ENCODE measurements at regions of chr9 and their contacts with region 1.

Region 1: GRCh38 chr9:72038890-72039410 is 21.5 kb downstream of the C9orf57 start:
- DNase-seq: peak; percentile 60 to 71 (median 70)
- H3K4me3 ChIP-seq: no peak overlapping the region
- H3K4me3 Mint-ChIP-seq: no peak overlapping the region
- H3K27ac ChIP-seq: no peak overlapping the region
- H3K27ac Mint-ChIP-seq: peak overlapping the region in 2 of 7 donors; percentile 26 to 64
- H3K4me1 ChIP-seq: peaks cover 14 to 21% of the 10 kb centered on the region in 2 donors
- H3K4me1 Mint-ChIP-seq: peaks cover 26% of the 10 kb centered on the region
- H3K27me3 ChIP-seq: no peaks in the 10 kb centered on the region
- H3K27me3 Mint-ChIP-seq: peaks cover 2 to 4% (median 3%) of the 10 kb centered on the region in 3 donors
- CTCF ChIP-seq: peak; percentile 97

Region 2: DNA sequence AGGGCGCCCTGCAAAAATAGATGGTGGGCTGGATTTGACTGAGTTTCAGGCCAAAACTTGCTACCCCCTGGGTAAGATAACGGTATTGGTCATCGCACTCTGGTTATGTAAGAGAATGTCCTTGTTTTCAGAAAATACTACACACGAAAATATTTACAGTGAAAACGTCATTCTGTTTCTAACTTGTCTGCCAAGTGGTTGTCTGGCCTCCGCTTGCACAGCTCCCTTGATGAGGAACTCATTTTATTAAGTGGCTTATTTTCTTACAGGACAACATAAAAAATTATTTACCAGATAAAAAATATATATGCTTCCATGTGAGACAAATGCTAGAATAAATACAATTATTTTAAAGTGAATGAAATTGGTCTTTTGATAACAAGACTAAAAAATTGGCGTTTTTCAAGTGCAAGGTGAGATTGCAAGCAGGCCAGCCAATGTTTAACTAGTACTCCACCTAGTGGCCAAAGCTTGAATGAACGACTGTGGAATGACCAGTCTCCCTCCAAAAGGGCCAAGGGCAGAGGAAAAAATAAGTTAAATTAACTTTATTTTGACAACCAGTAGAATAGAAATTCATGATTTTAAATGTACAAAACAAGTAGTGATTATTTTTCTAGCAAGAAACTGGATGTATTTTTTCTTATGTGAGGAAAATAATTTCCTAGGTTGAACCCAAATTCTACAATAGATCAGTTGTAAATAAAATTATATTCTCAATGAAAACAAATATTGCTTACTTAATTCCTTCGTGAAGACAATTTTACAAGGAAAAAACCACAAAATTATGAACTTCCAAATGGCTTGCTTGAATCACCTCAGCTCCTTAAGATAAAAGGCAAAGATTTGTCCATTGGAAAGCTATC is 232.9 kb after region 1 on chr9:
- intact Hi-C with region 1: loop called (anchors 2 to 5 kb)
- DNase-seq: peak; percentile 44 to 66 (median 55)
- H3K4me3 ChIP-seq: no peak overlapping the region
- H3K4me3 Mint-ChIP-seq: no peak overlapping the region
- H3K27ac ChIP-seq: no peak overlapping the region
- H3K27ac Mint-ChIP-seq: no peak overlapping the region
- H3K4me1 ChIP-seq: peaks cover 0 to 3% of the 10 kb centered on the region in 2 donors
- H3K4me1 Mint-ChIP-seq: peaks cover 9% of the 10 kb centered on the region
- H3K27me3 ChIP-seq: no peaks in the 10 kb centered on the region
- H3K27me3 Mint-ChIP-seq: peaks cover 0 to 3% (median 1%) of the 10 kb centered on the region in 3 donors
- CTCF ChIP-seq: peak; percentile 92

Region 3: DNA sequence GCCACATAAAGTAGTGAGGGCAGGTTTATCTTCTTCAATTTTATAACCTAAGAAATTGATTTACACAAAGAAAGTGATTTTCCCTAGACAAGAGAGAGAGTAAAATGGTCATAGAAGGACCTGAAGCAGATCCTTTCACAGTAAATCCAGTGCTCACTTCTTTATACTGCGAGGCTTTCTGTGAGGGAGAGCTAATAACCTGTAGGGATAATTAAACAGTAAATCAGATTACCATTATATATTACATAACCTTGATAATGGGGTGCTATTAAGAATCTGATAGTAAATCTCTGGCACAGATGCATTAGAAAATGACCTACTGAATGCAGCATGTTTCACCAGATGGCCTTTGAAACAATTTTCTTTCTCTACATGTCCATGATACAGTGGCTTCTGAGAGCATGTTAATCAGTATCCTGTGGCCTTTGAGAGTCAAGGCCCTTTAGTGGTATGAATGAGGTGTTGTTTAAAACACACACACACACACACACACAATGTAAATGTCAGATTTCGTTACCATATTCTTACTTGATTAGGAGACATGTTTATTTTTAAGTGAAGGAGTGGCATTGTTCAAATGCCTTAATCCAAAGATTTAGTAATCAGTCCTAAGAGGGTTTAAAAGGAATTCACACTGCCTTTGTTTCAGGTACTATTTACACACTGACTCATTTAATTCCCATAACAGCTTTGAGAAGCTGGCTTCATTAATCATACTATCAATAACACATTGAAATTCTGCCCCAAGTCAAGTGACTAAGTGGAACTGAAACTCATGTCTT is 789.2 kb after region 1 on chr9:
- intact Hi-C with region 1: loop called in 1 of 2 experiments (anchors 10 kb)
- DNase-seq: no peak
- H3K4me3 ChIP-seq: no peak overlapping the region
- H3K4me3 Mint-ChIP-seq: no peak overlapping the region
- H3K27ac ChIP-seq: no peak overlapping the region
- H3K27ac Mint-ChIP-seq: no peak overlapping the region
- H3K4me1 ChIP-seq: no peaks in the 10 kb centered on the region
- H3K4me1 Mint-ChIP-seq: peaks cover 5% of the 10 kb centered on the region
- H3K27me3 ChIP-seq: peaks cover 0 to 1% of the 10 kb centered on the region in 2 donors
- H3K27me3 Mint-ChIP-seq: peaks cover 1 to 2% (median 2%) of the 10 kb centered on the region in 3 donors
- CTCF ChIP-seq: no peak

Region 4: DNA sequence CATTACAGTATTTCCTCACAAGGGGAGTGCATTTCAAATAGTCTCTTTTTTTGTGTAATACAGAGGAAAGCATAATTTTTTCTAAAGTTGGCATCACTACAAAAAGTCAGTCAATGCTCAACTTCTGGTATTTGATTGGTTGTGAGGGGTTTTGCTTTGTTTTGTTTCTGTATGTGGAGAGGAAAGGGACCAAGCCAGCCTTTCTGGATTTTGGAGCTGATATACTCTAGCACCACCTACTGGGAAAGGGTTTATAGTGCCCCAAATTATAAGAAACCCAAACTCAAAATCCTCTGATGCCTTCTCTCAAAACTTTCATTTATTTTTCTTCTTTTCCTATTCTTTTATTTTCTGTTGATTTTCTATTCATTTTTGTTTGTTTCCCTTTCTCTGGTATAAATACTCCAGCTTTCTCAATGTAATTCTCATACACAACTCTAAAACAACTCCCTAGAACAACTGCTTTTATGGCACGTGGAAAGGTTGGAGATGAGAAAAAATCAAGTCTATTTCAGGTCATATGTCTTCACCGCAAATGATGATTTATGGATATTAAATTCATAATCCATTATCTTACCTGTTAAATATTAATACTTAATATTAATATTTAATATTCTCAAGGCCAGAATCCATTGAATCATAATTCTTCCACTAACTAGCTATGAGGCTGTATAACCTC is 1043.2 kb after region 1 on chr9:
- intact Hi-C with region 1: loop called in 1 of 2 experiments (anchors 10 kb)
- DNase-seq: peak in 2 of 3 donors; percentile 7 to 8
- H3K4me3 ChIP-seq: no peak overlapping the region
- H3K4me3 Mint-ChIP-seq: no peak overlapping the region
- H3K27ac ChIP-seq: no peak overlapping the region
- H3K27ac Mint-ChIP-seq: no peak overlapping the region
- H3K4me1 ChIP-seq: no peaks in the 10 kb centered on the region
- H3K4me1 Mint-ChIP-seq: no peaks in the 10 kb centered on the region
- H3K27me3 ChIP-seq: no peaks in the 10 kb centered on the region
- H3K27me3 Mint-ChIP-seq: peaks cover 0 to 2% (median 1%) of the 10 kb centered on the region in 3 donors
- CTCF ChIP-seq: peak; percentile 78

Measured in CD14-positive monocyte (primary cell).